Heart right ventricle (tissue), 16 donors: ENCODE measurements at regions of chr4 and their contacts with region 1.

Region 1: GRCh38 chr4:7518871-7519637 is 84.3 kb upstream of the PSAPL1 start:
- DNase-seq: peak; percentile 71 to 73
- ATAC-seq: peak; percentile 66 to 90 (median 77)
- H3K4me3 ChIP-seq: no peak overlapping the region
- H3K27ac ChIP-seq: no peak overlapping the region
- H3K4me1 ChIP-seq: peaks cover 0 to 33% (median 3%) of the 10 kb centered on the region in 9 donors
- H3K27me3 ChIP-seq: peaks cover 0 to 49% (median 27%) of the 10 kb centered on the region in 7 donors
- CTCF ChIP-seq: no peak

Region 2: DNA sequence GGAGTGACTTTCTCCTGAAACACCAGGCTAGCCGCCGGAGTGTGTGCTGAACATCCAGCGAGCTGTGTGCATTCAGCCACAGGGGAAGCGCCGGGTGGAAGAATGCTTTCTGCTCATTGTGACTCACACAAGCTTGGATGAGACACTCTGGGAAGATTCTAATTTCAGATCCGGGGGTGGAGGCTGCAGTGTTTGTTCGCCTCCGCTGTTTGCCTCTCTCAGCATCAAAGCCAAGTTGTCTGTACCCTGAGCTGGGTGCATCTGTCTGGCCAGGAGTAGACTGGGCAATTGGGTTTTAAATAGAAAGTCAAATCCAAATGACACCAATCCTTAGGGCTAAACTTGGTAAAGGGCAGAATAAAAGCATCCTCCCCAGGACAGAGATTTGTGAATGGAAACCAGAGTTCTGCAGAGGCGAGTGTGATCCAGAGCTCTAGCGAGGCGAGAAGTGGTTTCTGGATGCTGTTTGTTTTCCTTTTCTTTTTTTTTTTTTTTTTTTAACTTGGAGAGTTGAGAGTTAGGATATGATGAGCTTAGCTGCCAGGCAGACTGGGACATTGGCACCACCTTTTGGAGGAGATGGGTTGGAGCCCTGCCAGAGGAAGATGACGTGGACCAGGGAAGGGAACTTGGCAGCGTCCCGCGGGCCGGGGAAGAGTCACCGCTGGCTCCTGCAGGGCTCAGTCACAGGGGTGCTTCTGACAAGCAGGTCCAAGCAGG is 111.7 kb after region 1 on chr4:
- intact Hi-C with region 1: loop called in 1 of 10 experiments (anchors 5 kb)
- DNase-seq: peak; percentile 74 to 87
- ATAC-seq: peak; percentile 68 to 92 (median 78)
- H3K4me3 ChIP-seq: peak overlapping the region in 1 of 10 donors; percentile 3
- H3K27ac ChIP-seq: peak overlapping the region in 5 of 10 donors; percentile 8 to 56 (median 39)
- H3K4me1 ChIP-seq: peaks cover 6 to 42% (median 23%) of the 10 kb centered on the region in 9 donors
- H3K27me3 ChIP-seq: peaks cover 0 to 27% (median 16%) of the 10 kb centered on the region in 7 donors
- CTCF ChIP-seq: no peak